Activated CD8-positive, alpha-beta T cell treated with anti-CD3 and anti-CD28 coated beads for 36 hours (primary cell): ENCODE measurements at regions of chr2 and their contacts with region 1.

Region 1: GRCh38 chr2:236569573-236569973 is at the start of gene ACKR3:
- DNase-seq: peak; percentile 87
- ATAC-seq: peak; percentile 94
- H3K4me3 Mint-ChIP-seq: peak within 1 kb of the TSS; percentile 76
- H3K27ac Mint-ChIP-seq: peak within 1 kb of the TSS; percentile 38
- H3K4me1 Mint-ChIP-seq: peaks cover 26% of the 10 kb centered on the region
- H3K27me3 Mint-ChIP-seq: no peaks in the 10 kb centered on the region
- CTCF ChIP-seq: no peak
- total RNA-seq, gene ACKR3: 2.4 to 3.4 TPM

Region 2: GRCh38 chr2:236352761-236353593 is 216.6 kb before region 1 on chr2:
- CTCF ChIA-PET with region 1: interaction called, 5 read pairs
- POLR2A ChIA-PET with region 1: no interaction called
- intact Hi-C with region 1: loop called (anchors 5 kb)
- DNase-seq: peak; percentile 56
- ATAC-seq: peak; percentile 34
- H3K4me3 Mint-ChIP-seq: no peak overlapping the region
- H3K27ac Mint-ChIP-seq: no peak overlapping the region
- H3K4me1 Mint-ChIP-seq: peaks cover 4% of the 10 kb centered on the region
- H3K27me3 Mint-ChIP-seq: peaks cover 3% of the 10 kb centered on the region
- CTCF ChIP-seq: peak; percentile 85

Region 3: GRCh38 chr2:236526455-236527158 is 43.0 kb before region 1 on chr2:
- CTCF ChIA-PET with region 1: interaction called, 17 read pairs
- POLR2A ChIA-PET with region 1: interaction called, 4 read pairs
- intact Hi-C with region 1: no loop called
- DNase-seq: no peak
- ATAC-seq: no peak
- H3K4me3 Mint-ChIP-seq: no peak overlapping the region
- H3K27ac Mint-ChIP-seq: no peak overlapping the region
- H3K4me1 Mint-ChIP-seq: no peaks in the 10 kb centered on the region
- H3K27me3 Mint-ChIP-seq: peaks cover 2% of the 10 kb centered on the region
- CTCF ChIP-seq: no peak

Region 4: GRCh38 chr2:236536727-236537398 is 32.7 kb before region 1 on chr2:
- CTCF ChIA-PET with region 1: interaction called, 10 read pairs
- POLR2A ChIA-PET with region 1: interaction called, 8 read pairs
- intact Hi-C with region 1: no loop called
- DNase-seq: peak; percentile 70
- ATAC-seq: peak; percentile 81
- H3K4me3 Mint-ChIP-seq: peak overlapping the region; percentile 96
- H3K27ac Mint-ChIP-seq: peak overlapping the region; percentile 96
- H3K4me1 Mint-ChIP-seq: peaks cover 47% of the 10 kb centered on the region
- H3K27me3 Mint-ChIP-seq: no peaks in the 10 kb centered on the region
- CTCF ChIP-seq: no peak

Region 5: DNA sequence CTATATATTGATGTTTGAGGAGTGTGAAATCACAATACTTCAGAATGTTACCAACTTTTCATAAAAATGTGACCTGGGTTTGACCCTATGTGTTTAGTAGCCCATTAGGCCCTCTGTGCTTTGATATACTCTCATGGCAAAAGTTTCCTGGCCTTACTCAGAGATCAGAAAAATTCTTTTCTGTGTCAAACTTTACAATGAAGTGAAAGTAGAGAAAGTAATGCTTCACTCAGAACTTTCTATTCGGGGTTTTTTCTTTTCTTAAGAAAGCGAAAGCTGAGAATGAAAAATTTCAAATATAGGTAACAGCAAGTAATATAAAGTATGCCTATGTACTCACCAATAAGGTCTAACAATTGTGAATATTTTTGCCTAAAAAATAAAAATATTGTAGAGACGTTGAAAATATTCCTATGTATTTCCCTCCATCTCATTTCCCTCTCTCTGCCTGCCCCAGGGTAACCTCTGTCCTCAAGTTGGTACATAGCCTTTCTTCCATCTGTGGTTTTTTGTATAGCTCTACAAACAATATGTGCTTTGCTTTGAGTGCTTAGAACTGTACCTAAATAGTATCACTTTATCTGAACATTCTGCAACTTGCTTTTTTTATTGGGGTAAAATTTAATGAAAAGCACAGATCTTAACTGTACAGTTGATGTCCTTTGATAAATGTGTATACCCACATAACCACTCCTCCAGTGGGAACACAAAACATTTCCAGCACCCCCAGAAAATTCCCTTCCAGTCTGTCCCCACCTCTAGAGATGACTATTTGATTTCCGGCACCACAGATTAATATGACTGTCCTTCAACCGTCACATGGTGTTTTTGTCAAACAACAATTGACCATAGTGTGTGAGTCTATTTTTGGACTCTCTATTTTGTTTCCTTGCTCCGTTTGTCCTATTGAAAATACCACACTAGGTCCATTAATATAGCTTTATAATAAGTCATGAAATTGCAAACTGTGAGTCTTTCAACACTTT is 10.3 kb before region 1 on chr2:
- CTCF ChIA-PET with region 1: interaction called, 34 read pairs
- POLR2A ChIA-PET with region 1: no interaction called
- intact Hi-C with region 1: no loop called
- DNase-seq: no peak
- ATAC-seq: peak; percentile 42
- H3K4me3 Mint-ChIP-seq: peak overlapping the region; percentile 34
- H3K27ac Mint-ChIP-seq: peak overlapping the region; percentile 75
- H3K4me1 Mint-ChIP-seq: peaks cover 53% of the 10 kb centered on the region
- H3K27me3 Mint-ChIP-seq: no peaks in the 10 kb centered on the region
- CTCF ChIP-seq: no peak

Region 6: GRCh38 chr2:236592821-236593220 is 23.2 kb after region 1 on chr2:
- CTCF ChIA-PET with region 1: no interaction called
- POLR2A ChIA-PET with region 1: no interaction called
- intact Hi-C with region 1: no loop called
- DNase-seq: no peak
- ATAC-seq: no peak
- H3K4me3 Mint-ChIP-seq: no peak overlapping the region
- H3K27ac Mint-ChIP-seq: no peak overlapping the region
- H3K4me1 Mint-ChIP-seq: no peaks in the 10 kb centered on the region
- H3K27me3 Mint-ChIP-seq: no peaks in the 10 kb centered on the region
- CTCF ChIP-seq: no peak